ENCODE measurements at regions of chr1 and their contacts with region 1.

Region 1: GRCh38 chr1:224623743-224624333 is 7.7 kb downstream of the CNIH3 start:
- DNase-seq: peak; percentile 83
- H3K4me3 Mint-ChIP-seq: peak overlapping the region; percentile 70
- H3K27ac Mint-ChIP-seq: peak overlapping the region; percentile 94
- H3K4me1 Mint-ChIP-seq: peaks cover 48% of the 10 kb centered on the region
- H3K27me3 Mint-ChIP-seq: peaks cover 39% of the 10 kb centered on the region

Region 2: DNA sequence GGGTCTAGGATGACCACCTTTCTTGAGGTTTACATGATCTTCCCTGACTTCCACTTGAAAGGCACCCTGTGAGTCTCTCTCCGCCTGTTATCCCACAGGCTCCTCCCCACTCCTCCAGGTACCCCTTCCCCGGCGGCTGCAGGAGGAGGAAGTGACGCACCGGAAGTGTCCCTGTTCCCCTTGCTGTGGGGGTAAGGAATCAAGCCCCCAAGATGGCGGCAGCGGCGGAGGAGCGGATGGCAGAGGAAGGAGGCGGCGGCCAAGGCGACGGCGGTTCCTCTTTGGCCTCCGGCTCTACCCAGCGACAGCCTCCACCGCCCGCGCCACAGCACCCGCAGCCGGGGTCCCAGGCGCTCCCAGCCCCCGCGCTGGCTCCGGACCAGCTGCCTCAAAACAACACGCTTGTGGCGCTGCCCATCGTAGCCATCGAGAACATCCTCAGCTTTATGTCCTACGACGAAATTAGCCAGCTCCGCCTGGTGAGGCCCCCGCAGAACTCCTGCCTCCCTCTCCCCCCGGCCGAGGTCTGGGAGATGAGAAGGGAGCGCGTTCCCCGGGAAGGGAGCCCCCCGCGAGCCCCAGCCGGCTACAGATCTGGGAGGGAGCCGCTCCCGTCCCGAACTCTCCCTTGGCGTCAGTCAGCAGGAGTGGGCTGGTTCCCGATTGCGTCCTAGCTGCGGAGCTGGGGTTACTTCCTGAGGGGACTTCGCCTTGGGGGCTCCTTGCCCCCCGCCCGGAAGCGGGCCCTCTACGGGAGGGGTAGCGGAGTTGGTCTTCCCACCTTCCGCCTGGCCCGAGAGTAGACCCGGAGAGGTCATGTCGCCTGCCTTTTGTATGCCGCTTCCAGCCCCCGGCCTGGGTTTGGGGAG is 509.7 kb before region 1 on chr1 and contains the start of gene FBXO28:
- intact Hi-C with region 1: no loop called
- DNase-seq: peak; percentile 90
- H3K4me3 Mint-ChIP-seq: peak within 1 kb of the TSS; percentile 91
- H3K27ac Mint-ChIP-seq: peak within 1 kb of the TSS; percentile 89
- H3K4me1 Mint-ChIP-seq: peaks cover 27% of the 10 kb centered on the region
- H3K27me3 Mint-ChIP-seq: peaks cover 19% of the 10 kb centered on the region
- total RNA-seq, gene FBXO28: 29.3 and 32.2 TPM in 2 replicates

Region 3: DNA sequence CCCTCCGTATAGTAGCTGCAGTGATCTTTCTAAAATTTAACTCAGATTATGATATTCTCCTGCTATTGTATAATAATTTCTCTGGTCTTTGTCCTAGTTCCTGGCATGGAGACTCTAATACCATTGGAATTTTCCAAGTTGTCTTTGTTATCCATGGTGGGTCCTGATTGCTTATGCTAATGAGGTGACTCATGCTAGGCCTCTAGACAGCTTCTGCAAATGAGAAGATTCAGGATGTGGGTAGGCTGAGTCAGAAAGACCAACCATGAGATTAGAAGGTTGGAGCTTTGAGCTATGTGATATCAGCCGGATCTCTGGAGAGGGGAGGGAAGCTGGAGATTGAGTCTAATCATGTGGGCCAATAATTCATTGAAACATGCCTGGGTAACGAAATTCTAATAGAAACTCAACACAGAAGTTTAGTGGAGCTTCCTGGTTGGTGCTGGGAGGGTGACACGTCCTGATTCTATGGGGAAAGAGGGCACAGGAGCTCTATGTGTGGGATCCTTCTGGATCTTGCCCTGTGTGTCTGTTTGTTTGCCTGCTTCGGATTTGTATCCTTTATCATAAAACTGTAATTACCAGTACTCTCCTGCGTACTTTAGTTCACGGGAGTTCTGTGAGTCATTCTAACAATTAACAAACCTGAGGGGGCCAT is 80.9 kb before region 1 on chr1:
- intact Hi-C with region 1: loop called (anchors 2 kb)
- DNase-seq: peak; percentile 11
- H3K4me3 Mint-ChIP-seq: peak overlapping the region; percentile 23
- H3K27ac Mint-ChIP-seq: no peak overlapping the region
- H3K4me1 Mint-ChIP-seq: peaks cover 29% of the 10 kb centered on the region
- H3K27me3 Mint-ChIP-seq: peaks cover 9% of the 10 kb centered on the region

Region 4: DNA sequence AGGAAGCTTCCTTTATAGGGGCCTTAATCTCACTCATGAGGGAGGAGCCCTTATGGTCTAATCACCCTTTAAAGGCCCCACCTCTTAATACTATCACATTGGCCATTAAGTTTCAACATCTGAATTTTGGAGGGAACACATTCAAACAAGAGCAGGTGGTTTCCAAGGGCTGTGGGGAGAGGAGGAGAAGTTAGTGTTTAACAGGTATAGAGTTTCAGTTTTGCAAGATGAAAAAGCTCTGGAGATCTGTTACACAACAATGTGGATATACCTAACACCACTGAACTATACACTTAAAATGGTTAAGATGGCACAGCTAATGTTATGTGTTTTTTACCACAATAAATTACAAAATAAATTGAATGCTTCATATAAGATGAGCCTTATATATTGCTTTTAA is 192.2 kb after region 1 on chr1:
- intact Hi-C with region 1: no loop called
- DNase-seq: no peak
- H3K4me3 Mint-ChIP-seq: no peak overlapping the region
- H3K27ac Mint-ChIP-seq: no peak overlapping the region
- H3K4me1 Mint-ChIP-seq: no peaks in the 10 kb centered on the region
- H3K27me3 Mint-ChIP-seq: peaks cover 5% of the 10 kb centered on the region

Region 5: DNA sequence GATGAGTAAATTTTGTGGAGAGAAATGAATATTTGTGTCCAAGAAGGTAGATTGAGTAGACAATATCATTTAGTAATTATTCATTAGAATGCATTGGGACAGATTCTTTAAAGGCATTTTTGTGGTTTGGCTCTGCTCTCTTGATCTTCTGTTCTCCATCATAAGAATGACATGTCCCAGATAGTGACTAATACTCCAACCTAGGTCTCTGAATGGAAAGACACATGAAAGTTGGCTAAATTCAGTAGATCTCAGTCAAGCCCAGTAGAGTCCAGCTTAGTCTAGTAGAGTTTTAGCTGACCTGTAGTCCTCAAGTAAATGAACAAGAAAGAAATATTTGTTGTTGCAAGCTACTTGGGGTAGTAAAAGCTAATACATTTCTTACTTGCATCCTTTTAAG is 243.9 kb after region 1 on chr1:
- intact Hi-C with region 1: no loop called
- DNase-seq: no peak
- H3K4me3 Mint-ChIP-seq: no peak overlapping the region
- H3K27ac Mint-ChIP-seq: no peak overlapping the region
- H3K4me1 Mint-ChIP-seq: no peaks in the 10 kb centered on the region
- H3K27me3 Mint-ChIP-seq: no peaks in the 10 kb centered on the region